GM12878 (cell line): ENCODE measurements at regions of chr12 and their contacts with region 1.

Region 1: GRCh38 chr12:103503977-103504376 is 8.2 kb upstream of the C12orf42 start:
- DNase-seq: no peak
- ATAC-seq: peak; percentile 26
- H3K4me3 ChIP-seq: no peak overlapping the region
- H3K27ac ChIP-seq: no peak overlapping the region
- H3K4me1 ChIP-seq: peaks cover 22% of the 10 kb centered on the region
- H3K27me3 ChIP-seq: no peaks in the 10 kb centered on the region
- CTCF ChIP-seq: peak; percentile 59 to 80 (median 78)
- EP300 ChIP-seq: no peak
- POLR2A ChIP-seq: no peak
- RAD21 ChIP-seq: peak; percentile 85

Region 2: DNA sequence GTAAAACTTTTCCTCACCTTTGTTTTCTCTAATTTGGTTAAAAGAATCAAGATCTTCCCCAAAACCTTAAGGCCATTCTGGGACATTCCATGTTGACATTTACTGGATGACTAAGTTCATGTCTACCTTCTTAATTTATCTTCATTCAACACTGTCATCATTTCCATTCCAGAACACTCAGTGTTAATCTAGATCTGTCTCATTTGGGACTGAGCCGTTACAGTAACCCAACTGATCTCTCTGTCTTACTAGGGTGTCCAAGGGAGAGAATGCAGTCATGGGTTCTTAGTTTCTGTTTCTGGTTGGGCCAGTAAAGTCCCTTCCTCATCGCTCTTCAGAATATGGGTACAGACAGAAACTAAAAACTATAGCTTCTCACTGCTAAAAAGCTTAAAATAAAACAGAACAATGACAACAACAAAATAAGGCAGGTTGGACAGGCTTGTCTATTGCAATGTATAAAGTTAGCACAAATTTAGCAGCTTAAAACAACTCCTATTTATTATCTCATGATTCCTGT is 401.7 kb before region 1 on chr12:
- CTCF ChIA-PET with region 1: interaction called, 3 read pairs
- POLR2A ChIA-PET with region 1: no interaction called
- RAD21 ChIA-PET with region 1: interaction called, 3 read pairs
- SMC1A ChIA-PET with region 1: interaction called, 8 read pairs
- in situ Hi-C with region 1: loop called (anchors 5 kb)
- intact Hi-C with region 1: loop called (anchors 1 kb)
- DNase-seq: peak; percentile 72
- ATAC-seq: peak; percentile 91
- H3K4me3 ChIP-seq: no peak overlapping the region
- H3K27ac ChIP-seq: peak overlapping the region; percentile 82
- H3K4me1 ChIP-seq: peaks cover 29% of the 10 kb centered on the region
- H3K27me3 ChIP-seq: no peaks in the 10 kb centered on the region
- CTCF ChIP-seq: no peak
- EP300 ChIP-seq: peak; percentile 73 to 89; a peak in 3 of 4 replicates
- POLR2A ChIP-seq: no peak
- RAD21 ChIP-seq: peak; percentile 22; the same call in 1 of the 2 replicates

Region 3: DNA sequence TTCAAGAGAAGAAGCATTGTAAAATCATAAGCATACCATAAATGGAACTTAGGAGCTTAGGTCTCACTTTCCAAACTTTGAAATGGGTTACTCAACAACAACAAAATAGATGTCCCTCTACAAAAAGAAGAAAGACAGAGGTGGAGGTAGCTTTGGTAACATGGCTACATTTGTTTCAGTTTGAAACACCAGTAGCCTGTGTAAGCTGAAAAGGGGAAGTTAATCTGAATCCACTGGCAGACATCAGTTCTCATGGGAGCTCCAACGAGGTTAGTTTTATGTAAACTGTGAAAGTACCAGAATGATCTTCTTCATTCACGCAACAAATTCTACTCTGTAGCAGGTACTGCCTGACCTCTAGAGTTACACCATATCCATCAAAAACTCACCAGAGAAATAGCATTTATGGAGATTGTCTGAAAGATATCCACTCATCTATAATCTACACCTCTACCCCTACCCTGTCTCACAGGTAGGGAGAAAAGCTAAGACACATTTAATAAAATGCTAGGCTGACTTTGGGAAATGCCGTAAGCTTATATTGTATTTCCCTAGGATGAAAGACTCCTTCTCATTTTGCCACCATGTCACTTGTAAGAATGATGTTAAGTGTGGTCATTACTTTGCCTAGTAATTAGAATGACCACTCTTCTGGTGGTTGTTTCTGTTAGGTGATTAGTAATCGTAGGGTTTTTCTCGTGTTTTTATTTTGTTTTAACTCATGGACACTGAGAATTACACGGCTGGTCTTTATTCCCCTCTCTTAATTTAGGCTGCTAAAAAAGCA is 322.4 kb before region 1 on chr12:
- CTCF ChIA-PET with region 1: interaction called, 20 read pairs
- POLR2A ChIA-PET with region 1: no interaction called
- RAD21 ChIA-PET with region 1: interaction called, 8 read pairs
- SMC1A ChIA-PET with region 1: interaction called, 9 read pairs
- in situ Hi-C with region 1: loop called (anchors 5 kb)
- intact Hi-C with region 1: loop called (anchors 2 kb)
- DNase-seq: peak; percentile 88
- ATAC-seq: peak; percentile 96
- H3K4me3 ChIP-seq: no peak overlapping the region
- H3K27ac ChIP-seq: peak overlapping the region; percentile 45; the same call in 1 of the 2 replicates
- H3K4me1 ChIP-seq: no peaks in the 10 kb centered on the region
- H3K27me3 ChIP-seq: no peaks in the 10 kb centered on the region
- CTCF ChIP-seq: peak in 2 of 3 experiments; percentile 6 to 49; a peak in 2 of 6 replicates
- EP300 ChIP-seq: peak in 1 of 2 experiments; percentile 68; a peak in 2 of 4 replicates
- POLR2A ChIP-seq: no peak
- RAD21 ChIP-seq: peak; percentile 71

Region 4: GRCh38 chr12:103249612-103250011 is 254.4 kb before region 1 on chr12:
- CTCF ChIA-PET with region 1: no interaction called
- POLR2A ChIA-PET with region 1: no interaction called
- RAD21 ChIA-PET with region 1: no interaction called
- SMC1A ChIA-PET with region 1: no interaction called
- in situ Hi-C with region 1: no loop called
- intact Hi-C with region 1: no loop called
- DNase-seq: no peak
- ATAC-seq: no peak
- H3K4me3 ChIP-seq: no peak overlapping the region
- H3K27ac ChIP-seq: no peak overlapping the region
- H3K4me1 ChIP-seq: no peaks in the 10 kb centered on the region
- H3K27me3 ChIP-seq: no peaks in the 10 kb centered on the region
- CTCF ChIP-seq: no peak
- EP300 ChIP-seq: no peak
- POLR2A ChIP-seq: no peak
- RAD21 ChIP-seq: no peak

Region 5: DNA sequence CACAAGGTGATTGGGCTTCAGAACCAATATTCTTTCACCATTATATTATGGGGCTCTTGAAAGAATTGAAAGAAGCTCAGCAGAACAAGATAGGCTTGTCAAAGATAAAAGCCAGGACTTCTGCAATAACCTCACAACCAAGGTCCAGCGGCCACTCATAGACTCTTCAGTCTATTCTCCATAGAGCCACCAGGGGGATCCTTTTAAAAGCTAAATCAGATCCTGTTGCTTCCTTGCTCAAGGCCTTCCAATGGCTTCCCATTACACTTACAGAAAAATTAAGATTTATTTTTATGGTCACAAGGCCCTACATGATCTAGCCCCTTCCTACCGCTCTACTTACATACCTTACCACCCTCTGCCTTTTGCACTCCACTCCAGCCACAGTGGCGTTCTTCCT is 177.8 kb before region 1 on chr12:
- CTCF ChIA-PET with region 1: interaction called, 20 read pairs
- POLR2A ChIA-PET with region 1: no interaction called
- RAD21 ChIA-PET with region 1: interaction called, 3 read pairs
- SMC1A ChIA-PET with region 1: interaction called, 9 read pairs
- in situ Hi-C with region 1: no loop called
- intact Hi-C with region 1: loop called (anchors 1 kb)
- DNase-seq: no peak
- ATAC-seq: peak; percentile 65
- H3K4me3 ChIP-seq: no peak overlapping the region
- H3K27ac ChIP-seq: no peak overlapping the region
- H3K4me1 ChIP-seq: no peaks in the 10 kb centered on the region
- H3K27me3 ChIP-seq: no peaks in the 10 kb centered on the region
- CTCF ChIP-seq: peak; percentile 26 to 42 (median 31); a peak in 4 of 6 replicates
- EP300 ChIP-seq: no peak
- POLR2A ChIP-seq: no peak
- RAD21 ChIP-seq: peak; percentile 70

Region 6: DNA sequence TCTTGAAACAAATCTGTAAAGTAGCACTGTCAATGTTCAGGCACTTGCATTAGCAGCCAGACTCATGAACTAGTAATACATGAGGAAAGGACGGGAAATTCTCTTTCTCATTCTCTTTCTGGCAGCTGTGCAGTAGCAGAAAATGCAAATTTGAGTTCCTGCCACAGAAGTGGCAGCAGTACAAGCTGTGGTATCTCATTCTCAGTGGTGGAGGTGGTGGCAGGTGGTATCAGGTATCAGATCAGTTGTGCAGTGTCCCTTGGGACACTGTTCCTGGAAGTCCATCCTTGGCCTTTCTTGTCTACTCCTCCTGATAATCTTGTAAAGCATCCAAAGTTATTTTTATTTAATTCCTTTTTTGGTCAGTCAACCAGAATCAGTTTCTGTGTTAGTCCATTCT is 111.3 kb before region 1 on chr12:
- CTCF ChIA-PET with region 1: no interaction called
- POLR2A ChIA-PET with region 1: no interaction called
- RAD21 ChIA-PET with region 1: no interaction called
- SMC1A ChIA-PET with region 1: no interaction called
- in situ Hi-C with region 1: no loop called
- intact Hi-C with region 1: loop called (anchors 2 kb)
- DNase-seq: peak; percentile 79
- ATAC-seq: peak; percentile 97
- H3K4me3 ChIP-seq: no peak overlapping the region
- H3K27ac ChIP-seq: no peak overlapping the region
- H3K4me1 ChIP-seq: peaks cover 8% of the 10 kb centered on the region
- H3K27me3 ChIP-seq: no peaks in the 10 kb centered on the region
- CTCF ChIP-seq: no peak
- EP300 ChIP-seq: peak; percentile 50 to 89; a peak in 3 of 4 replicates
- POLR2A ChIP-seq: no peak
- RAD21 ChIP-seq: no peak

Region 7: DNA sequence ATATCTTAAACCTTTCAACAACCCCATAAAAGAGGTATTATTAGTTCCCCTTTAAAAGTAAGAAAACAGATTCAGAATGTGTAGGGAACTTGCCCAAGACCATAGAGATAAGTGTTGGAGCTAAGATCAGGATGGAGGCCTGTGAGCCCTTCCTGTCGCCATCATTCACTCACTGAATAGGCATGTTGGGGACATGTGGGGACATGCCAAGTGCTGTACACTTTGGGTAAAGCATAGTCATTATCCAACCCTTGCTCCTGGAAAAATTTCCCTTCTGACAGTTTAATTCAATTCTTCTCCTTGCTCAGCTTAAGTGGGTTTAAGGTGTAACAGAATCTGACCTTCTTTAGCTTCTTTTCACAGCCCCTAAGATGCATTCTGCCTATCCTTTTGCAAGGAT is 19.8 kb after region 1 on chr12:
- CTCF ChIA-PET with region 1: interaction called, 4 read pairs
- POLR2A ChIA-PET with region 1: interaction called, 7 read pairs
- RAD21 ChIA-PET with region 1: interaction called, 24 read pairs
- SMC1A ChIA-PET with region 1: interaction called, 16 read pairs
- in situ Hi-C with region 1: no loop called
- intact Hi-C with region 1: no loop called
- DNase-seq: no peak
- ATAC-seq: no peak
- H3K4me3 ChIP-seq: no peak overlapping the region
- H3K27ac ChIP-seq: no peak overlapping the region
- H3K4me1 ChIP-seq: no peaks in the 10 kb centered on the region
- H3K27me3 ChIP-seq: no peaks in the 10 kb centered on the region
- CTCF ChIP-seq: no peak
- EP300 ChIP-seq: no peak
- POLR2A ChIP-seq: no peak
- RAD21 ChIP-seq: no peak

Region 8: GRCh38 chr12:103538397-103538796 is 34.4 kb after region 1 on chr12:
- CTCF ChIA-PET with region 1: interaction called, 17 read pairs
- POLR2A ChIA-PET with region 1: interaction called, 3 read pairs
- RAD21 ChIA-PET with region 1: interaction called, 3 read pairs
- SMC1A ChIA-PET with region 1: interaction called, 334 read pairs
- in situ Hi-C with region 1: no loop called
- intact Hi-C with region 1: no loop called
- DNase-seq: no peak
- ATAC-seq: no peak
- H3K4me3 ChIP-seq: no peak overlapping the region
- H3K27ac ChIP-seq: no peak overlapping the region
- H3K4me1 ChIP-seq: no peaks in the 10 kb centered on the region
- H3K27me3 ChIP-seq: no peaks in the 10 kb centered on the region
- CTCF ChIP-seq: no peak
- EP300 ChIP-seq: no peak
- POLR2A ChIP-seq: no peak
- RAD21 ChIP-seq: no peak